HEK293 (cell line): ENCODE measurements at regions of chr3 and their contacts with region 1.

Region 1: DNA sequence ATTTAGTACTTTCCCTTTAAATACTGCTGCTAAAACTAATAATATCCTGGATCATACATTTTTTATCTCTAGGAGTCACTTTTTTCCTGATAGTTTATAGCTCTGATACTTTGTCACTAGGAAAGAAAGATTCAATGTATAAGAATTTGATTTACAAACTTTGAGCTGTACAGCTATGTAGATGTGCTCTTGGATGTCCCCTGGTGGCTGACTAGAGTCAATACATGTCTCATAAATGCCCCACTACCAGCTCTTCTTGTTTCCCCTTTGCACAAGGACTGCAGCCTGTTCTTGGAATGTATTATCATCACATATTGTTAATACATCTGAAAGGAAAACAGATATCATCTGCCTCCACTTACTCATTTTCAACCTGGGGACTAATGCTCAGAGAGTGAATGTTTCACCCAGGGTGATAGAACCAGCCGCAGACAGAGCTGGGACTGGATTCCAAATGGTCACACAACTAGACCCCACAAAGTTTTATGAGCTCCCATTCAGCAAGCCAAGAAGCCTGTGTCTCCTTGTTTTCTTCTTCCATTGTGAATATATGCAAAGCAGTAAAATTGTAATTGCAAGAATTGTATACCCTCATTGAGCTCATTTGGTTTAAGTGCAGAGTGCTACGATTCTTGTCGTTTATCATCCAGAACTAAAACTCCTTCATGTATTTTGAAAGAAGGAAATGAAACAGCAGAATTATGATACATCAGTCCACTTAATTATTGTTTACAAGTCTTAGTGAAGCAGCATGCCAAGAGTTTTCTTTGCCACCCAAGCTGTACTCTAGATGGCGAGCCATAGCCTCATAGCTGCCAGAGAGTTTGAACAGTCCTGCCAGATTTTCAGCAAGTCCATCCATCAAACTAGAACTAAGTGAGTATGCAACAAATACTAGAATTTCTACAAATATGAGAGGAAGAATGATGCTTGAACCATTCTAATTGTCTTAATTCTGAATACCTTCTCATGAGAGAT is 261.6 kb upstream of the LMCD1 start:
- H3K4me3 ChIP-seq: no peak overlapping the region
- H3K27ac ChIP-seq: no peak overlapping the region
- H3K4me1 ChIP-seq: no peaks in the 10 kb centered on the region
- CTCF ChIP-seq: no peak

Region 2: GRCh38 chr3:8095724-8096123 is 144.3 kb before region 1 on chr3:
- CTCF ChIA-PET with region 1: interaction called, 11 read pairs
- POLR2A ChIA-PET with region 1: no interaction called
- H3K4me3 ChIP-seq: no peak overlapping the region
- H3K27ac ChIP-seq: no peak overlapping the region
- H3K4me1 ChIP-seq: no peaks in the 10 kb centered on the region
- CTCF ChIP-seq: no peak

Region 3: DNA sequence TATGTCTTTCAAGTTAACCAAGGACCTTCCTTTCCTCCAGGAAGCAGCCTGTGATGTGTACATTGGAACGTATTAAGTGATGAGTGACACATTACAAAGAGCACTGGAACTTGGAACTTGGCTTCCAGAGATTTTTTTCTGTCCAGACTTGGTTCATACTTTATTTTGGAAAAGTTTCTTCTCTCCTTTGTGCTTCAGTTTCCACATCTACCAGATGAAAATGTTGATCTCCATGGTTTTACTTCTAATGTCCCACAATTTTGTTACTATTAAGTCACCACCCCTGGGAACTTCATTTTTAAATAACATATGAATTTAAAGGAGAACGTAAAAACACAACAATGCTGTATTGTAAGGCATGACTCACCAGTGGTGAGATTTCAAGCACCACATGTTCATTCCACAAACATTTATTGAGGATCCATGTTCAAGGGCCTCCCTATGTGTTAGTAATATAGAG is 29.1 kb before region 1 on chr3:
- CTCF ChIA-PET with region 1: no interaction called
- POLR2A ChIA-PET with region 1: no interaction called
- H3K4me3 ChIP-seq: no peak overlapping the region
- H3K27ac ChIP-seq: no peak overlapping the region
- H3K4me1 ChIP-seq: no peaks in the 10 kb centered on the region
- CTCF ChIP-seq: no peak

Region 4: DNA sequence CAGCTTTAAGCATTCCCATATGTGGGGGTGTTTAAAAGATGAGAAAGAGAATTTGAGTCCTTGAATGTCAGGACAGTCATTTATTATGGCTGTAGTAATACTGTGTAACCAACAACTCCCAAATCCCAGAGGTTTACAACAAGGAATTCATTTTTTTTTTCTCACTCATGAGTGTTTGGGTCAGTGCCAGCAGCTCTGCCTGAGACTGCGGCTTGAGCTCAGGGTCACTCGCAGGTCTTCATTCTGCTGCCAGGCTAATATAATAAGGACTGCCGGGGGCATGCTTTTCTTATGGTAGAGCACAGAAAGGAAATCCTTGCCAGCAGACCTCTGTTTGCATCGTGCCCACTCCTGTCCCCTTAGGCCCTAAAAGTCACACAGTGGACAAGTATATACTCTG is 16.2 kb before region 1 on chr3:
- CTCF ChIA-PET with region 1: interaction called, 31 read pairs
- POLR2A ChIA-PET with region 1: no interaction called
- H3K4me3 ChIP-seq: no peak overlapping the region
- H3K27ac ChIP-seq: no peak overlapping the region
- H3K4me1 ChIP-seq: no peaks in the 10 kb centered on the region
- CTCF ChIP-seq: no peak

Region 5: GRCh38 chr3:8254489-8254888 is 14.5 kb after region 1 on chr3:
- CTCF ChIA-PET with region 1: interaction called, 20 read pairs
- POLR2A ChIA-PET with region 1: no interaction called
- H3K4me3 ChIP-seq: no peak overlapping the region
- H3K27ac ChIP-seq: no peak overlapping the region
- H3K4me1 ChIP-seq: no peaks in the 10 kb centered on the region
- CTCF ChIP-seq: no peak

Region 6: DNA sequence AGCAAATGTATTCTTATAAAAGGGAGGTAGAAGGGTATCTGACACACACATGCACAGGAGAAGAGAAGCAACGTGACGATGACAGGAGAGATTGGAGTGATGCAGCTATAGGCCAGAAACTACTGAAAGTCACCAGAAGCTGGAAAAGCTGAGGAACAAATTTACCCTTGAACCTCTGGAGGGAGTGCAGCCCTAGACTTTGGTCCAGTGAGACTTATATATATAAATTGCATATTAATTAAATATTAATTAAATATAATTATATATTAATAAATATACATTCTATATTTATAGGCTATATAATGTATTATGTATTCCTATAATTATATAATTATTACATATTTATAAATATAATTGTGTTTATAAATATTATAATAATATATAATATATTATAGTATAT is 165.1 kb after region 1 on chr3:
- CTCF ChIA-PET with region 1: no interaction called
- POLR2A ChIA-PET with region 1: no interaction called
- H3K4me3 ChIP-seq: no peak overlapping the region
- H3K27ac ChIP-seq: no peak overlapping the region
- H3K4me1 ChIP-seq: no peaks in the 10 kb centered on the region
- CTCF ChIP-seq: no peak

Region 7: DNA sequence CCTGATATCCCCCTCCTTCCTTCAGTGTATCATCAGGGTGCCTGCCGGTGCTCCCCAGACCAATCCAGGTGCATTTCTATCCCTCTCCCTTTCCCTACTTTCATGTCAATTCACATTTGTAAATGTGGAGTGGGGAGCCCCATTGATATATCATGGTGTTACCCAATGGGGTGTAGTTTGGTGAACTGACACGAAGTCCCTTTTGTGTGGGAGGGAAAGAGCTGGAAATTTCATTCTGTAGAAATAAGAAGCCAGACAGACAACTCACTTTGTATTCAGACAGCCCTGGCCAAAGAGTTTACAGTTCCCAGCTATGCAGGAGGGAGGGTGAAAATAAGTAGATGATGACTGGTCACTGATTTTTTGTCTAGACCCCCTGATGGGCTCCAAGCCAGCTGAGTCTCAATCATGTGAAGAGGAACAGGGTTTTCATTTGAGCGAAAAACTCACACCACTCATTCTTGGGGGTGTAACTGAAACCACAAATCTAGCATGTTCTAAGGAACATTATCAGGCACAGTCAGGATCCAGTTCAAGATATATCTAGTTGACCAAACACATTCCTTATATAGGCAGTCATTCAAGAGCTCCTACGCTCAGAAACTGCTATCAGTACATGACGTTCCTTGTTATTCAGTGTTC is 320.5 kb after region 1 on chr3:
- CTCF ChIA-PET with region 1: no interaction called
- POLR2A ChIA-PET with region 1: no interaction called
- H3K4me3 ChIP-seq: no peak overlapping the region
- H3K27ac ChIP-seq: no peak overlapping the region
- H3K4me1 ChIP-seq: peaks cover 5% of the 10 kb centered on the region
- CTCF ChIP-seq: no peak